Activated T-helper 1 cell treated with anti-CD3 and anti-CD28 coated beads, Interleukin-12 subunit alpha, Interleukin-12 subunit beta, Interleukin-2, Interleukin-4 antibody, amounts not matched to agents 30 ng/mL and 10 ng/mL and 1 ng/mL, durations not matched to agents 14 hours and 24 hours and 36 hours (primary cell): ENCODE measurements at regions of chrX and their contacts with region 1.

Region 1: DNA sequence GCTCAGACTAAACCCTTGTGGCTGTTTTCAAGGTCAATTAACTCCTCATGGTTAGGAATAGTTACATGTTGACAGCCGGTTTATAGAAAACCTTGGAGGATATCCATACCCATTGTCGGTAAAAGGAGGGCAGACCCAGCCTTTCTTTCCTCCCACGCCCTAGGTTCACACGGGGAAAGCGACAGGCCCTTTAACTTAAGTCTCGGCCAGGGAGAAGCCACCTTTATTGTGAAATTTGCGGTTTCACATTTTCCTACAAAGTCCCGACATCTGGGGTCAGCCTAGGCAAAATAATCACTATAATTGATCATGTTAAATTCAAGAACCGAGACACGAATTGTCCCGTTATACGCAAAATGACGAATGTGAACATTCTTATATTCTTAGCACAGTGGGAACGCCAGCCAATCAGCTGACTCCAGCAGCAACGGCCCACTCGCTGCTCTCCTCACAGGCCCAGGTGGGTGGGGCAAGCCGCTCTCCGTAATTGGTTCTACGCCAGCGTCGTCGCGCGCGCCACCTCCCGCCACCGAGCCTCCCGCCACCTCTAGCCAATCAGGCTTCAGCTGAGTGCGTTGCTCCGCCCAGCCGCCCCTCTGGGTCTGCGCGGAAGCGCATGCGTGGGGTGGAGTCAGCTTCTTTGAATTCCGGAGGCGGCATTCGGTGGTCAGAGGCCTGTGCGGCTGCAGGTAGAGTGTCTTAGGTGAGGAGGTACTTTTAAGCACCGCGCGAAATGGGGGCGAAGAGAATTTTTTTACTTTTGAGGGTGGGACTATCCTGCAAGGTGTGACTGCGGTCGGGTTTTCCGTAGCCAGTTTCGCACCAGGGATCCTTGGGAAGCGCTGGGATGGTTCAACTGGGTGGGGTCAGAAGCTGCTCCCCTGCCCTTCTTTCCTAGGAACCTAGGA is at the start of gene CENPI:
- DNase-seq: peak; percentile 91
- H3K4me3 Mint-ChIP-seq: peak within 1 kb of the TSS; percentile 94
- H3K27ac Mint-ChIP-seq: peak within 1 kb of the TSS; percentile 87
- H3K4me1 Mint-ChIP-seq: peaks cover 38% of the 10 kb centered on the region
- H3K27me3 Mint-ChIP-seq: no peaks in the 10 kb centered on the region
- total RNA-seq, gene CENPI: 11.4 and 13.1 TPM in 2 replicates

Region 2: GRCh38 chrX:100819837-100820666 is 277.7 kb before region 1 on chrX and contains the start of gene CSTF2:
- intact Hi-C with region 1: loop called (anchors 2 kb)
- DNase-seq: peak; percentile 74
- H3K4me3 Mint-ChIP-seq: peak within 1 kb of the TSS; percentile 84
- H3K27ac Mint-ChIP-seq: peak within 1 kb of the TSS; percentile 95
- H3K4me1 Mint-ChIP-seq: peaks cover 7% of the 10 kb centered on the region
- H3K27me3 Mint-ChIP-seq: peaks cover 3% of the 10 kb centered on the region
- total RNA-seq, gene CSTF2: 70.3 and 72.1 TPM in 2 replicates

Region 3: DNA sequence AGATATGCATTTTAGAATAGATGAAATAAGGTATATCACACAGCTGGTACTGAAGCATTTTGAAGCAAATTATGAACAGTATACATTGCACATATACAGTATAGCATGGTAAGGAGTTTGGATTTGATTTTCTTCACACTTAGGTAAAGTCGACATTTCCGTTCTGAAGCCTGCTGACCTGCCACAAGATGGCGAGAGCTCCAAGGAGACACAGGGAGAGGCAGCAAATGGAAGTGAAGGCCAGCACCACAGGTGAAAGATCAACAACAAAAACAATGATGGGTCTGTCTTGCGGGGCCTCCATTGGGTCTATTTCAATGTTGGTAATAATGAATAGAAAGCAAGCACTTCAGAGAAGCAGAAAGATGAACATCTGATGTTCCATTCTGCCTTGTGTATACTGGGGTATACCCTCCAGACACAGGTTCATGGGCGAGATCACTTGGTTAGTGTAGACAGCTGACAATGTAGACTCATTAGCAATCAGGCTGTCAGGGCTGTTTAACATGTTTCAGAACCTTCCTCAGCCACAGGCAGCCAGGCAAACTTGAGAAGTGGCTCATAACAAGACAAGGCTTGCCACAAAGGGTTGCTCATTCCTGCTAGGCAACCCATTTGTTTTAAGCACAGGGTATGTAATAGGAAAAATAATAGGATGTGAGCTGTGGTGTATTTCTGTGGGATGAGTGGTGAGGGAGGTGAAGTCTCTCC is 202.3 kb before region 1 on chrX:
- intact Hi-C with region 1: loop called (anchors 10 kb)
- DNase-seq: no peak
- H3K4me3 Mint-ChIP-seq: no peak overlapping the region
- H3K27ac Mint-ChIP-seq: no peak overlapping the region
- H3K4me1 Mint-ChIP-seq: no peaks in the 10 kb centered on the region
- H3K27me3 Mint-ChIP-seq: no peaks in the 10 kb centered on the region

Region 4: DNA sequence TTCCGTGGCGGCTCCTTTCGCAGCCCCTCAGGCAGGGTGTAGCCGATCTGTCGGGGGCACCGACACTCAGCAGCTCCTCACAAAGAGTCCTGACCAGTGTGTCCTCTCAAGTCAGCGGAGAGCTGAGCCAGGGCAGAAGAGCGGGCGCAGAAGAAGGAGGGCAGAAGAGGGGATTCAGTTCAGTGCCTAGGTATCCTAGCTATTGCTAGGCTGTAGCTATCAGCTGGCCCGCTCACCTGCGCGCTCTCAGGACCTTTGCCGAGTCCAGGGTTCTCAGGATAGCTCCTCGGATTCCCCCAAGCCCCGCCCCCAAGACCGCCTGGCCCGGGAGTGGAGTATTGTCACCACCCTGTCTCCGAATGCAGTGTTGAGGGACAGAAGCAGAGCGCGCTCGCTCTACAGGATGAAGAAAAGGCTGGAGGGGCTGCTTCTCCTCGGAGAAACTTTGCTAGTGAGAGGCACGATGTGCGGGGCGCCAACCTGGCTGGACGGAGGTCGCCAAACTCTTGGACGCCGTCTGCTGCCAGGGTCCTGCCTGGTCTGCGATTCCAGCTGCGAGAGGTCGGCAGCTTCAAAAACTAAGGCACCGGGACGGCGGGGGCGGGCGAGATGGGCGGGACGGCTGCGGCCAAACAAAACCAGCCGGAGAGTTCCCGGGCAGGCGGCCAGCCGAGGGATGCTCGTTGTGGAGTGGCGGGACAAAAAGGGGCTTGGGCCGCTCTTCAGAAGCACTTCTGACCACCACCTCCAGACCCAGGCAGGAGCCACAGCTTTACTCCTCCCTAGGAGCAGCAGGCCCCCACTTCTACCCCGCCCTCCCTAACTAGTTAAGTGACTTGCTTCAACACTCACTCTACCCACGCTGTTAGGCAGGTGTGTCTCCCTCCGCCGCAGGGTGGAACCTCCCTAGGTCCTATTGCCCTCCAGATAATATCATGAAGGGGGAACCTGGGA is 168.9 kb before region 1 on chrX and contains the start of gene XKRX:
- intact Hi-C with region 1: loop called (anchors 2 kb)
- DNase-seq: peak; percentile 5
- H3K4me3 Mint-ChIP-seq: peak within 1 kb of the TSS; percentile 85
- H3K27ac Mint-ChIP-seq: peak within 1 kb of the TSS; percentile 34
- H3K4me1 Mint-ChIP-seq: peaks cover 22% of the 10 kb centered on the region
- H3K27me3 Mint-ChIP-seq: no peaks in the 10 kb centered on the region
- total RNA-seq, gene XKRX: 0.39 and 0.51 TPM in 2 replicates

Region 5: GRCh38 chrX:101051549-101052302 is 46.1 kb before region 1 on chrX and contains the start of gene TRMT2B:
- intact Hi-C with region 1: loop called (anchors 1 kb)
- DNase-seq: peak; percentile 72
- H3K4me3 Mint-ChIP-seq: peak within 1 kb of the TSS; percentile 88
- H3K27ac Mint-ChIP-seq: peak within 1 kb of the TSS; percentile 93
- H3K4me1 Mint-ChIP-seq: peaks cover 17% of the 10 kb centered on the region
- H3K27me3 Mint-ChIP-seq: no peaks in the 10 kb centered on the region
- total RNA-seq, gene TRMT2B: 17.2 and 19.3 TPM in 2 replicates

Region 6: DNA sequence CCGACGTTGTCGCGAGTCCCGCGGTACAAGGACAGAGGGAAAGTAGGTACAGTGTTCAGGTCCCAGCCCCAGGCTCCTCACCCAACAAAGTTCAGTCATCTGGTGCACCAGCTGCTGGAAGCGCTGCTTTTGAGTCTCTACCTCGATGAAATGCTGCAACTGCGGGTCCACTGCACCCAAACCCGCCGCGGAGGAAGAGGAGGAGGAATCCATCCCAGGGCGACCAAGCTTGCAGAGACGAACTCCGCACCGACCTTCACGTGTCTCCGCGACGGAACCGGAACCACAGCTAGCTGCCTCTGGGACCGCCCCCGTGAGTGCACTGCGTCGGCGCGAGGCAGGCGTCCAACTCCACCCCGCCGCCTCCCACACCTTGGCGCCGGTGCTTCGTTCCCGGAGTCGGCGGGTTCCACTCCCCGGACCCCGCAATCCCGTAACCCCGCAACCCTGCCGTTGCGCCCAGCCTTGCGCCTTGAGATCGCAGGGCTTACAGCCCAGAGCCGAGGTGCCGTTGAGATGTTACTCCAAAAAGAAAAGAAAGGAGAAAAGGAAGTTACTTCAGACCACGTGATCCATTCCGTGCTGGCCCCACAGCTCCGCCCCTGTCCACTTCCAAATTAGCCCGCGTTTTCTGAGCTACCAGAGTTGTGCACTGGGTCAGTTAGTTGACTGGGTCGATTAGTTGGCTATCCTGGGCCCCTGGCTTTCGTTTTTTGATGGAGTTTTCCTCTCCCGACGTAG is 250.8 kb after region 1 on chrX and contains the start of gene TIMM8A:
- intact Hi-C with region 1: loop called (anchors 1 kb)
- DNase-seq: peak; percentile 72
- H3K4me3 Mint-ChIP-seq: peak within 1 kb of the TSS; percentile 90
- H3K27ac Mint-ChIP-seq: peak within 1 kb of the TSS; percentile 80
- H3K4me1 Mint-ChIP-seq: peaks cover 5% of the 10 kb centered on the region
- H3K27me3 Mint-ChIP-seq: no peaks in the 10 kb centered on the region
- total RNA-seq, gene TIMM8A: 30.9 and 36.5 TPM in 2 replicates

Region 7: DNA sequence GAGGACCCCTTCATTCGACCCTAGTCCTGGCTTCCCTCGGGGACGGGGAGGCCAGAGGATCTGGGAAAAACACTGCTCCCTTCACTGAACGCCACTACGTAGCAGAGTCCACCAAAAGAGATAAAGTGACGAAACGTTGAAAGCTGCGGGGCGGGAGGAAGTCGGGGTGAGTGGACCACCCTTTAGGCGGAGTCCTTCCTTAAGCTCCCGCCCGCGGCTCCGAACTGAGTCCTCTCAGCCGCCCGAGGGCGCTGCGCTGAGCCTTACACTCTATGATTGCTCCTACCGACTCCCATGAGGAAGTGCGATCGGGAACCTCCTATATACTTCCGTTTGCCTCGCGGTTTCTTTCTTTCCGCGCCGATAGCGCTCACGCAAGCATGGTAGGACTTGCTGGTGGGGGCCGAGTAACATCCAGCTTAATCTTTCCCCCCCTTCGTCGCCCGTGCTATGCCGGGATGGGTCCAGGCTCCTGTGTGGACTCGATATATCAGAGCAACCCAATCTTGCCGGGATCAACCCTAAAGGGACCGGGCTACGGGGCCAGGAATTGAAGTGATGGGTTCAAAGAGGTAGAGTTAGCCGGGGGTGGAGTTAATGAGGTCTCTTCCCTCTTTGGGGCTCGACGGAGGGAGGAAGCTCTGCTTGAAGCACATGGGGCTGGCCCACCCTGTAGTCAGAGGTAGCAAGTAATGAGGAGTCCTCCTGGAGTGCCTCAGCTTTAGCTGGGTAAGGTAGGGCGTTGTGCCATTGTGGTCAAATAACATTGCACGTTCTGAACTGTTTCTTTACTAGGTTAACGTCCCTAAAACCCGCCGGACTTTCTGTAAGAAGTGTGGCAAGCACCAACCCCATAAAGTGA is 293.1 kb after region 1 on chrX and contains the start of gene RPL36A:
- intact Hi-C with region 1: loop called (anchors 5 kb)
- DNase-seq: peak; percentile 75
- H3K4me3 Mint-ChIP-seq: peak within 1 kb of the TSS; percentile 98
- H3K27ac Mint-ChIP-seq: peak within 1 kb of the TSS; percentile 94
- H3K4me1 Mint-ChIP-seq: peaks cover 7% of the 10 kb centered on the region
- H3K27me3 Mint-ChIP-seq: peaks cover 2% of the 10 kb centered on the region
- total RNA-seq, gene RPL36A: 226 and 269 TPM in 2 replicates